ENCODE measurements at regions of chr6 and their contacts with region 1.

Region 1: GRCh38 chr6:90393232-90393884 is 96.7 kb upstream of the BACH2 start:
- DNase-seq: peak in 1 of 2 experiments; percentile 58
- H3K4me3 ChIP-seq: no peak overlapping the region
- H3K4me3 Mint-ChIP-seq: no peak overlapping the region
- H3K27ac Mint-ChIP-seq: no peak overlapping the region
- H3K4me1 ChIP-seq: no peaks in the 10 kb centered on the region
- H3K4me1 Mint-ChIP-seq: no peaks in the 10 kb centered on the region
- H3K27me3 ChIP-seq: 0 out of 2 replicates have a peak, but pooled peaks cover 1% of the 10 kb centered on the region
- H3K27me3 Mint-ChIP-seq: peaks cover 10% of the 10 kb centered on the region
- CTCF ChIP-seq: peak; percentile 69 to 73

Region 2: DNA sequence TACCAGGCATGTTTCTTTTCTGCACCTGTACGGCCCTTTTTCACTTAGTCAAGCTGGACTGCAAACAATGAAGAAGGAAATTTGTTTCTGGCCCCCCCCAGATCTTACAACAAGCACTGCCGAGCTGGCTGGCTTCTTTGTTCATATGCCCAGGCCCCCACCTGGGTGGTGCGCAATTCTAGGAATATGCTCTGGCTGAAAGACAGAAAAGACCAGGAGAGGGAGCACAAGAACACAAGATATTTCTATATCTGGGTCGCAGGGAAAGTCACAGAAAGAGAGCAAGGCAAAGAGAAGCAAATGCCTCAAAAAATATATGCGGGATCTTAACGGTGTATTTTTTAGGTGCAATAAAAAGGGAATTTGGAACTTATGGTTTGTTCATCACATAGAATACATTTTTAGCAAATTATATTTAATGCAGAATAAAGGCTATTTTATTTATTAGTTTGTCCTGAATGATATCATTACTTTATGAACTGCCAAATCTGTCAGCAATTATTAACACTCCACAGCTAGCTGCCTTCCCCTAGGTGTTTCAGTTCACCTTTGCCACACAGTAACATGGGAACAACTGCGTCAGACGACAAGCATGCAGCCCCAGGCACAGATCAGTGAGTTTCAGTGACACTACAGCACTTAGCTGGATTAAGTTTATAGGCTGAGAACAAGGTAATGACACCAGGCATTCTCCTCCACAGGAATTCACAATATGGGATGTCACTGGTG is 422.6 kb before region 1 on chr6:
- CTCF ChIA-PET with region 1: no interaction called
- POLR2A ChIA-PET with region 1: no interaction called
- intact Hi-C with region 1: loop called (anchors 1 kb)
- DNase-seq: peak in 1 of 2 experiments; percentile 54
- H3K4me3 ChIP-seq: no peak overlapping the region
- H3K4me3 Mint-ChIP-seq: no peak overlapping the region
- H3K27ac Mint-ChIP-seq: no peak overlapping the region
- H3K4me1 ChIP-seq: no peaks in the 10 kb centered on the region
- H3K4me1 Mint-ChIP-seq: no peaks in the 10 kb centered on the region
- H3K27me3 ChIP-seq: no peaks in the 10 kb centered on the region
- H3K27me3 Mint-ChIP-seq: peaks cover 13% of the 10 kb centered on the region
- CTCF ChIP-seq: peak; percentile 33 to 59

Region 3: GRCh38 chr6:90285611-90286381 is 107.6 kb before region 1 on chr6:
- CTCF ChIA-PET with region 1: no interaction called
- POLR2A ChIA-PET with region 1: no interaction called
- intact Hi-C with region 1: loop called (anchors 1 kb)
- DNase-seq: peak; percentile 17 to 33
- H3K4me3 ChIP-seq: no peak overlapping the region
- H3K4me3 Mint-ChIP-seq: no peak overlapping the region
- H3K27ac Mint-ChIP-seq: no peak overlapping the region
- H3K4me1 ChIP-seq: 0 out of 2 replicates have a peak, but pooled peaks cover 3% of the 10 kb centered on the region
- H3K4me1 Mint-ChIP-seq: peaks cover 5% of the 10 kb centered on the region
- H3K27me3 ChIP-seq: no peaks in the 10 kb centered on the region; the same call in 1 of the 2 replicates
- H3K27me3 Mint-ChIP-seq: peaks cover 12% of the 10 kb centered on the region
- CTCF ChIP-seq: no peak

Region 4: DNA sequence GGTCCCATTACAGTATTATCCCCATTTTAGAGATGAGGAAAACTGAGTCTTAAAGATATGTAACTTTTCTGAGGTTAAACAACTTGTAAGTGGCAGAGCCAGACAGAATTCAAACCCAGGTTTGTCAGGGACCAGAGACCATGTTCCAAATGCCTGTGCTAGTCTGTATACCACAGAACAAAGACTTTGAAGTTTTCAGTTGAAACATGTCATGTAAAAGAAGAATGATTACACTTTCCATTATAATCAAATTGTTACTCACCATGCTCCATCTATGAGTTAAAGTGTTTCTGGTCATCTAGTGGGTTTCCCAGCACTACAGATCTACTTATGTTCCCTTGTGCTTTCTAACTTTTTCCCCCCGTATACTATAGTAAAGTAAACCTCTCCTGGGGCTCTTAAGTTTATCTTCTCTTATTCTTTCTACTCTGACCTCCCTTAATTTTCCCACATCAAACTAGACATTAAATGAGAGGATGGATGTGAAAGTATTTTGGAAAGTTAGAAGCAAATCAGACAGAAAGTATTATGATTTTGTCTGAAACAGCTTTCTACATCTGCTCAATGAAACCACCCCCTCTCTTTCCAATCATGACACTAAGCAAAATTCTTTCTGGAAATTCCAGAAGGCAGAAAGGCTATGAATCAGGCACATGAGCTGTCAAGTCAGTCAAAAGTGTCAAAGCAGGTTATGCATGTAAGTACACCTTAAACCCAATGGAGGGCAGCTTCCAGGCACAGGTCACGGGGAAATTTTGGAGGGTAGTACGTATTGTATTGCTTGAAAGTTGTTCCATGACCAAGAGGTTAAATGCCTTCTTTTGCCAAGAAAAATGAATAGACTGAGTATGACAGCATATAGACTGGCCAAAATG is 326.2 kb after region 1 on chr6:
- CTCF ChIA-PET with region 1: no interaction called
- POLR2A ChIA-PET with region 1: no interaction called
- intact Hi-C with region 1: no loop called
- DNase-seq: no peak
- H3K4me3 ChIP-seq: no peak overlapping the region
- H3K4me3 Mint-ChIP-seq: no peak overlapping the region
- H3K27ac Mint-ChIP-seq: no peak overlapping the region
- H3K4me1 ChIP-seq: peaks cover 12% of the 10 kb centered on the region
- H3K4me1 Mint-ChIP-seq: peaks cover 16% of the 10 kb centered on the region
- H3K27me3 ChIP-seq: no peaks in the 10 kb centered on the region
- H3K27me3 Mint-ChIP-seq: peaks cover 9% of the 10 kb centered on the region
- CTCF ChIP-seq: no peak